IMR-90 (cell line): ENCODE measurements at regions of chr2 and their contacts with region 1.

Region 1: DNA sequence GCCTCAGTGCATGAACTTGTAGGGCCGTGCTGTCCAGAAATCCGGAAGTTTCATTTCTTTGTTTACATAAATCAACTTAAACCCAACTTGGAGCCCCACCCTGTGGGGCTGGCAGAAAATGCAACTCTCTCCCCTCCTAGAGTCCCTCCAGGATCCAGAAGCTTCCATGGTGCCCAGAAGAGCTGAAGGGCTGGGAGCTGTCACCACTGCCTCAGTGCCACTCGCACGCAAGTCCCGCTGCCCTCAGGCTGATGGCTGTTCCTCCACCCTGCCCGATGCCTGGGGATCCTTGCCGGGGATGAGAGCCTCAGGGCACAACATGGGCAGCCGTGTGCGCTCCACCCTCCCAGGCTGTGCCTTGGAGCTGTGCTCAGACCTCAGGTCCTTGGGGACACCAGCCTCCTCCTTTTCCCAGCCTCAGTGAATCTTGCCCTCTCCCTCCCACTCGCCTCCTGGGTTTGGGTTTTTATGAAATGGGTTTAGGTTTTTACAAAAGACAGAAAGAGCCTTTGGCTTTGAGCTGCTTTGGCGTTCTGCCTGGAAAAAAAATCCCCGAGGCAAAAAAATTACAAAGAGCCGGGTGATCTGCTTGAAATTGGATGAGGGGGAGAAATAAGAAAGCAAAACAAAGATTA is 155.2 kb downstream of the TWIST2 start:
- DNase-seq: peak; percentile 65
- ATAC-seq: peak; percentile 87
- H3K4me3 ChIP-seq: no peak overlapping the region
- H3K27ac ChIP-seq: no peak overlapping the region
- H3K4me1 ChIP-seq: peaks cover 3% of the 10 kb centered on the region; the same call in 1 of the 2 replicates
- H3K27me3 ChIP-seq: peaks cover 30% of the 10 kb centered on the region
- CTCF ChIP-seq: peak; percentile 64
- POLR2A ChIP-seq: no peak
- RAD21 ChIP-seq: peak; percentile 79

Region 2: DNA sequence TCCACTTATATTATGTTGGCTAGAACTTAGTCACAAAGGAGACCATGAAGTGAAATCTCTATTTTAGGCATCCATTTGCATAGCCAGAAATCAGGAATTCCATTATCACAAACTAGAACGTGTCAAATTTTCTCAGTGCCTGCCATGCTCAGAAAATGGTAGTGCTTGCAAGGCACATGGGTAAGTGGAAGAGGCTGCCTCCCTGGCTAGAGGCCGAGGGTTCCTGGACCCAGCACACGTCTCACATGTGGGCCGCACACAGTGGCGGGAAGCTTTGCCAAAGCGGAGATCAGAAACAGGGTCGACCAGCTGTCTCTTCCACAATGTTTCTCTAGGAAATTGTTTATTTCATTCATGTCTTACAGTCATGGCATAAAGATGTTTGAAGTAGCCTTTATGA is 640.4 kb before region 1 on chr2:
- CTCF ChIA-PET with region 1: interaction called, 3 read pairs
- POLR2A ChIA-PET with region 1: no interaction called
- dilution Hi-C with region 1: no loop called
- in situ Hi-C with region 1: loop called (anchors 10 kb)
- intact Hi-C with region 1: loop called (anchors 2 kb)
- DNase-seq: no peak
- ATAC-seq: no peak
- H3K4me3 ChIP-seq: no peak overlapping the region
- H3K27ac ChIP-seq: no peak overlapping the region
- H3K4me1 ChIP-seq: no peaks in the 10 kb centered on the region
- H3K27me3 ChIP-seq: no peaks in the 10 kb centered on the region
- CTCF ChIP-seq: no peak
- POLR2A ChIP-seq: no peak
- RAD21 ChIP-seq: no peak

Region 3: GRCh38 chr2:238513346-238513745 is 489.7 kb before region 1 on chr2:
- CTCF ChIA-PET with region 1: interaction called, 4 read pairs
- POLR2A ChIA-PET with region 1: no interaction called
- dilution Hi-C with region 1: no loop called
- in situ Hi-C with region 1: no loop called
- intact Hi-C with region 1: loop called (anchors 10 kb)
- DNase-seq: peak; percentile 29
- ATAC-seq: peak; percentile 56
- H3K4me3 ChIP-seq: no peak overlapping the region
- H3K27ac ChIP-seq: no peak overlapping the region
- H3K4me1 ChIP-seq: no peaks in the 10 kb centered on the region; the same call in 1 of the 2 replicates
- H3K27me3 ChIP-seq: no peaks in the 10 kb centered on the region; the same call in 1 of the 2 replicates
- CTCF ChIP-seq: peak; percentile 50
- POLR2A ChIP-seq: no peak
- RAD21 ChIP-seq: peak; percentile 47; the same call in 1 of the 2 replicates

Region 4: DNA sequence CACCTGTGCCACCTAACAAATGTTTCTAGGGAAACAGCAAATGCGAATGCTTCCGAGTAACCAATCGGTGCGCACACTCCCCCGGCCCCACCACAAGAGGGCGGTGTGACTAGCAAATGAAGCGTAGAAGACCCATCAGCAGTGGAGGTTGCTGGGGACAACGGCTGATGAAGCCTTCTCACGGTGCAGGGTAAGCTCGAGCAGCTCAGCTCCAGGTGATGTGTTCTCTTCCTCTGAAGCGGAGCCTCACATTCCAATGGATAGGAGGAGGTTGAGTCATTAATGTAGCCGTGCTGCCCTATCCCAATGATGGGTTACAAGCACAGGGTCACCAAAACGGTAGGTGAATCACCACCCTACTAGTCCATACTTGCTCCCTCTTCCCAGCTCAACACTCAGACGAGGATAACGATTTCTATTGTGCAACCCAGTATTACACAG is 282.8 kb before region 1 on chr2:
- CTCF ChIA-PET with region 1: no interaction called
- POLR2A ChIA-PET with region 1: no interaction called
- dilution Hi-C with region 1: no loop called
- in situ Hi-C with region 1: no loop called
- intact Hi-C with region 1: loop called (anchors 10 kb)
- DNase-seq: peak; percentile 19
- ATAC-seq: peak; percentile 56; the same call in 1 of the 2 replicates
- H3K4me3 ChIP-seq: no peak overlapping the region
- H3K27ac ChIP-seq: no peak overlapping the region
- H3K4me1 ChIP-seq: no peaks in the 10 kb centered on the region
- H3K27me3 ChIP-seq: peaks cover 12% of the 10 kb centered on the region
- CTCF ChIP-seq: peak; percentile 46
- POLR2A ChIP-seq: no peak
- RAD21 ChIP-seq: peak; percentile 40

Region 5: DNA sequence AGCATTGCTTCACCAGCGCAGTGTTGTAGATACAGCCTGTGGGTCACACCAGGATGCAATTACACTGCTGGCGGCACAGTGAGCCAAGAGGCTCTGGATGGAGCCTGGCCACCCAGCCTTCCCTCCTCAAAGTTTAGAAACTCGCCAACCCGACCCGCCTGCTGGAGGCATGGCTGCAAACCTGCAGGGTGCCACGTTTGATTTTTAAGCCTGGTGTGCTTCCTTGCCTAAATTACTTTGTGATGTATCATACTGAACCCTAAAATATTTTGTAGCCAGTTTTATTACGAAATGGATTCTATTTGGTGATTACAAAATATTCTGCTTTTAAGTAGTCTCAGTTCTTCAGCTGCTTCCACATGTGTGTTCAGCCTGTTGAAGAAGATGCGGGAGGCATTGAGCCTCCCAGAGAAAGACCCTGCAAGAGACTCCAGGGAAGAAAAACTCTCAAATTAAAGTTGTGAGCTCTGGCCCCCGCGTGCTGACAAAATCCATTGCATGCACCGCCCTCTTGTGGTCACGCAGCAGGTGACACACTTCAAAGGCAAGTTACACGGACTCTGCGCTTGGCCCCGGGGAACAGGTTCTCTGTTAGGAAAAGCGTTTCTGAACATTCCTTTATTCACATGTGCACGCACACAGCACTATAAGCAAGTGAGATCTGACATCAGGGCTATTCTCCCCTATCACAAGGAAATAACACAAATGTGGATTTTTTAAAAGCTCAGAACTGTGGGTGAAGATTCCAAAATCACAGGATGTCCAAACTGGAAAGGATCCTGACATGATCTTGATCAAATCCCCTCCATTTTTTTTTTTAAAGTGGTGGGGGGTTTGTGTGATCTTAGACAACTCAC is 218.2 kb before region 1 on chr2:
- CTCF ChIA-PET with region 1: no interaction called
- POLR2A ChIA-PET with region 1: no interaction called
- dilution Hi-C with region 1: no loop called
- in situ Hi-C with region 1: no loop called
- intact Hi-C with region 1: loop called (anchors 1 kb)
- DNase-seq: peak; percentile 61
- ATAC-seq: peak; percentile 88
- H3K4me3 ChIP-seq: no peak overlapping the region
- H3K27ac ChIP-seq: no peak overlapping the region
- H3K4me1 ChIP-seq: no peaks in the 10 kb centered on the region; the same call in 1 of the 2 replicates
- H3K27me3 ChIP-seq: peaks cover 2% of the 10 kb centered on the region
- CTCF ChIP-seq: peak; percentile 89
- POLR2A ChIP-seq: no peak
- RAD21 ChIP-seq: peak; percentile 89

Region 6: DNA sequence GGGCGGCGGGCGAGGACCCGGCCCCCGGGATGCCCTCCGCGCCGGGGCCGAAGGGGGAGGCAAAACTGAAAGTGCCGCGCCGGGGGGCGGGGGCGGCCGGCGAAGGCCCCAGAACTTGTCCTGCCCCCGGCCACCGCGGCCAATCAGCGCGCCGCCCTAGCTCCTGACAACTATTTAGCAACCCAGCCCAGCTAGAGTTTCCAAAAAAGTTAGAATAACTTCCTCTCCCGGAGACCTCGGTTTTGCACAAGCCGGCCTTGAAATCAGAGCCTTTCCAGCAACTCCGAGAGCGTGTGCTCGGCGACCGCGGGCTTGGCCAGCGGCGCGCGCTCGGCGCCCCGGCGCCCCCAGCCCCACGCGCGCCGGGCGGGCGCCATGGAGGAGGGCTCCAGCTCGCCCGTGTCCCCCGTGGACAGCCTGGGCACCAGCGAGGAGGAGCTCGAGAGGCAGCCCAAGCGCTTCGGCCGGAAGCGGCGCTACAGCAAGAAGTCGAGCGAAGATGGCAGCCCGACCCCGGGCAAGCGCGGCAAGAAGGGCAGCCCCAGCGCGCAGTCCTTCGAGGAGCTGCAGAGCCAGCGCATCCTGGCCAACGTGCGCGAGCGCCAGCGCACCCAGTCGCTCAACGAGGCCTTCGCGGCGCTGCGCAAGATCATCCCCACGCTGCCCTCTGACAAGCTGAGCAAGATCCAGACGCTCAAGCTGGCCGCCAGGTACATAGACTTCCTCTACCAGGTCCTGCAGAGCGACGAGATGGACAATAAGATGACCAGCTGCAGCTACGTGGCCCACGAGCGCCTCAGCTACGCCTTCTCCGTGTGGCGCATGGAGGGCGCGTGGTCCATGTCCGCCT is 155.0 kb before region 1 on chr2 and contains the start of gene TWIST2:
- CTCF ChIA-PET with region 1: interaction called, 3 read pairs
- POLR2A ChIA-PET with region 1: no interaction called
- dilution Hi-C with region 1: no loop called
- in situ Hi-C with region 1: no loop called
- intact Hi-C with region 1: loop called (anchors 2 kb)
- DNase-seq: peak; percentile 91
- ATAC-seq: peak; percentile 84
- H3K4me3 ChIP-seq: peak within 1 kb of the TSS; percentile 90
- H3K27ac ChIP-seq: peak within 1 kb of the TSS; percentile 95
- H3K4me1 ChIP-seq: peaks cover 17% of the 10 kb centered on the region
- H3K27me3 ChIP-seq: no peaks in the 10 kb centered on the region
- CTCF ChIP-seq: no peak; the same call in 1 of the 2 replicates
- POLR2A ChIP-seq: peak; percentile 79
- RAD21 ChIP-seq: no peak; the same call in 1 of the 2 replicates
- total RNA-seq, gene TWIST2: 9.3 and 14.7 TPM in 2 replicates